ENCODE measurements at regions of chr12 and their contacts with region 1.

Region 1: GRCh38 chr12:44929236-44929885 is 53.2 kb upstream of the NELL2 start:
- DNase-seq: no peak
- H3K4me3 ChIP-seq: no peak overlapping the region
- H3K27ac ChIP-seq: no peak overlapping the region
- H3K4me1 ChIP-seq: peaks cover 0 to 4% (median 0%) of the 10 kb centered on the region in 6 donors
- H3K27me3 ChIP-seq: no peaks in the 10 kb centered on the region
- CTCF ChIP-seq: no peak
- POLR2A ChIP-seq: no peak

Region 2: GRCh38 chr12:44015335-44015941 is 913.9 kb before region 1 on chr12:
- intact Hi-C with region 1: loop called (anchors 5 kb)
- DNase-seq: no peak
- H3K4me3 ChIP-seq: no peak overlapping the region
- H3K27ac ChIP-seq: no peak overlapping the region
- H3K4me1 ChIP-seq: no peaks in the 10 kb centered on the region
- H3K27me3 ChIP-seq: no peaks in the 10 kb centered on the region
- CTCF ChIP-seq: peak in 7 of 11 experiments; percentile 24 to 48 (median 34)
- POLR2A ChIP-seq: no peak

Region 3: GRCh38 chr12:44774815-44775411 is 154.4 kb before region 1 on chr12:
- intact Hi-C with region 1: loop called (anchors 10 kb)
- DNase-seq: peak; percentile 73
- H3K4me3 ChIP-seq: no peak overlapping the region
- H3K27ac ChIP-seq: no peak overlapping the region
- H3K4me1 ChIP-seq: no peaks in the 10 kb centered on the region
- H3K27me3 ChIP-seq: no peaks in the 10 kb centered on the region
- CTCF ChIP-seq: peak; percentile 9 to 80 (median 52)
- POLR2A ChIP-seq: no peak

Region 4: DNA sequence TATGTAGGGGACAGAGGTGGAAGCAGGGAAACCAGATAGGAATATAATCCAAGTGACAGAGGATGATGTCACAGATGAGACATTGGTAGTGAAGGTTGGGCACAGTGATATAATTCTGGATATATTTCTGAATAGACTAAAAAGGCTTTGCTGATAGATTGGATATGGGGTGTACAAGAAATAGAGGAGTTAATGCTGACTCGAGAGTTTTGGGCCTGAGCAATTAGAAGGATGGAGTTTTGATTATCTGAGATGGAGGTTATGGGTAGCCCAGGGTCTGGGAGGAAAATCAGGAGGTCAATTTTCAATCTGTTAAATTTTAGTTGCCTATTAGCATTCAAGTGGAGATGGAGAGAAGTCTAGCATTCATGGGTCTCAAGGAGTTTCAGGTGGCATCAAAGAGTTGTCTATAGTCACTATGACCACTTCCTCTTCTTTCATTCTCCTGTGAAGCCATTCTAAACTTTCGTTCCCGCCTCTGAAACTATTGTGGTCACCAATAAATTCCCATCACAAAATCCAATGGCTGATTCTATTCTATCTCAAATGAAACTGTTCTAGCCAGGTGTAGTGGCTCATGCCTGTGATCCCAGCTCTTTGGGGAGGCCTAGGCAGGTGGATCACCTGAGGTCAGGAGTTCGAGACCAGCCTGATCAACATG is 275.9 kb after region 1 on chr12:
- intact Hi-C with region 1: no loop called
- DNase-seq: no peak
- H3K4me3 ChIP-seq: peak overlapping the region in 1 of 8 donors; percentile 35
- H3K27ac ChIP-seq: peak overlapping the region in 5 of 8 donors; percentile 27 to 73 (median 70)
- H3K4me1 ChIP-seq: peaks cover 2 to 40% (median 23%) of the 10 kb centered on the region in 6 donors
- H3K27me3 ChIP-seq: no peaks in the 10 kb centered on the region
- CTCF ChIP-seq: no peak
- POLR2A ChIP-seq: no peak

Measured in spleen (tissue), 13 donors.